AG04449 (cell line): ENCODE measurements at regions of chr6 and their contacts with region 1.

Region 1: GRCh38 chr6:35468181-35468979 is at the start of gene RPL10A:
- DNase-seq: peak; percentile 73
- H3K4me3 ChIP-seq: peak within 1 kb of the TSS; percentile 94
- CTCF ChIP-seq: peak; percentile 96

Region 2: DNA sequence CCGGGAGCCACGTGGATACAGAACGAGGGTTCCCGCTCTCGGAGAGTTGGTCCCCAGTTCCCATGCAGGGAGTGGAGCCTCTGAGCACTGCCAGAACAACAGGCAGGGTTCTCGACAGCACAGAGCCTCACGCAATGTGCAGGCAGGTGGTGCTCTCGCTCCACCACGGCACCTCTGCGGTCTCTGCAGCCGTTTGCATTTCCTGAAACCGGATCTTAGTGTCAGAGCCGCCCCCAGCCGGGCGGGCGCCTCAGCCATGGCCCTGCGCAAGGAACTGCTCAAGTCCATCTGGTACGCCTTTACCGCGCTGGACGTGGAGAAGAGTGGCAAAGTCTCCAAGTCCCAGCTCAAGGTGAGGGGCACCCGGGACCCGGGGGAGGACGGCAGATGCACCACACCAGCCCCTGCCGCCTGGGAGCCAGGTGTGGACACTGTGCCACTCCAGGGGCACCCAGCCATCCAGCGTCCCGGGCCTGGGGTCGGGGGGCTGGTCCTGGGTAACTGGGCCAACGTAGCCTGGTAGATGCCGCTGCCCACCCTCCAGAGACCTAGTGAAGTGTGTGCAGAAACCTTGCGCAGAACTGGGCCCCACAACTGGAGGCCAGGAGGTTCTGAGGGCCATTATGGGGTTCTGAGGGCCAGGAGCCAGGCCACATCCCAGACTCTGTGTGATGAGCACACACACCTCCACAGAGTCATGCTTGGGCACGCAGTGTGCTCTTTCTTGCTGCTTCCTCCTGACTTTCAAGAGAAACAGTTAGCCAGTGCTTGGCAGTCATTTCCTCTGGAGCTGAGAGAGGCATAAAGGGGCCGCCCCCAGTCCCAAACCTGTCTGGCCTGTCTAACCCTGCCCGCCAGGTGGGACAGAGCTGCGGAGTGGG is 170.5 kb before region 1 on chr6 and contains the start of gene DEF6:
- CTCF ChIA-PET with region 1: interaction called, 65 read pairs
- POLR2A ChIA-PET with region 1: no interaction called
- DNase-seq: peak; percentile 17
- H3K4me3 ChIP-seq: peak within 1 kb of the TSS; percentile 55
- CTCF ChIP-seq: peak; percentile 80

Region 3: GRCh38 chr6:35327349-35328027 is 140.9 kb before region 1 on chr6:
- CTCF ChIA-PET with region 1: interaction called, 13 read pairs
- POLR2A ChIA-PET with region 1: no interaction called
- DNase-seq: no peak
- H3K4me3 ChIP-seq: no peak overlapping the region
- CTCF ChIP-seq: peak; percentile 81

Region 4: DNA sequence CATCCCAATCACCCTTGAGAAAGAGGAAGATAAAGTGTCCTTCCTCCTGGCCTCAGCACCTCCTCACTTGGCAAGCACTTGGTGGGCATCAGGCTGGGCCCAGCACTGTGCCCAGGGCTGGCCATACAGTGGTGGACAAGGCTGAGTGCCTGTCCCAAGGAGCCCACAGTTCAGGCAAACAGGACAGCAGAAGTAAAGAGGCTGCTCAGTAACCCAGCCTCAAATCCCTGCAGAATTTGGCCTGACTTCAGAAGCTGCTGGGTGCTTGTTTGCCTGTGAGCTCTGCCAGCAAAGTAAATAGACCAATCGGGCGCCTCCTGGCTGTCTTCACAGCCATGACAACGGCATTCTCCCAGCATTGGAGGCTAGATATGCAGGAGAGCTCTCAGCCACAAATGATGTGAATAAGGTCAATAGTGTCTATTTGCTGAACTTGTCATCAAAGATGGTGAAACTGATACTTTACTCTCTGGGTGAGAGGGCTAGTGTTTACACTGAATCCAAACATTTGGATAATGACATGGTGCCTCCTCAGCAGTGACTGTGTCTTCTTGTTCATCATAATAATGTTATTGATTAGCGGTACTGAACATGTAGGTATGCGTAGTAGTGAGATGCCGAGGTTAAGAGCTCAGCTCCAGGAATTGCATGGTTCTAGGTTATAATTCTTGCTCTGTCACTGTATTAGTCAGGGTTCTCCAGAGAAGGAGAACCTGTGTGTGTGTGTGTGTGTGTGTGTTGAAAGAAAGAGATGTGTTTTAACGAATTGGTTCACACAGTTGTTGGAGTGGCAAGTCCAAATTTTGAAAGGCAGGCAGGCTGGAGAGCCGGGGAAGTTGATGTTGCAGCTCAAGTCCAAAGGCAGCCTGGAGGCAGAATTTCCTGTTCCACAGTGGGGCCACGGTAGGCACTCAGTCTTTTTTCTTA is 53.1 kb before region 1 on chr6:
- CTCF ChIA-PET with region 1: interaction called, 15 read pairs
- POLR2A ChIA-PET with region 1: interaction called, 3 read pairs
- DNase-seq: peak; percentile 69
- H3K4me3 ChIP-seq: no peak overlapping the region
- CTCF ChIP-seq: peak; percentile 68

Region 5: DNA sequence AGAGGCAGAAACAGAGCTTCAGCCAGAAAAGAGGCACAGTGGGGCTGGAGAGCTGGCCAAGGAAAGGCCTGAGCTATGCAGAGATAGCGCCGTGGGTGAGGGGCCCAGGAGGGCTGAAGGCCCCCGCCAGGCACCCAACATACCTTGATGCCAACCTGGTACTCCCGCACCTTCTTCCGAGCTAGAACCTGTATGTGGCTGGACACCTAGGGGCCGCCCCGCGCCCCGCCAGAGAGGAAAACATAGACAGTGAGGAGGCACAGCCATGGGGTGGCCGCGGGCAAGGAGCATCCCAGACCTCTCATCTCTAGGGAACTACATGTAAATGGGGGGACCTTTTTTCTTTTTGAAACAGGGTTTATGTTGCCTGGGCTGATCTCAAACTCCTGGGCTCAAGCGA is 11.8 kb after region 1 on chr6:
- CTCF ChIA-PET with region 1: interaction called, 9 read pairs
- POLR2A ChIA-PET with region 1: interaction called, 13 read pairs
- DNase-seq: no peak
- H3K4me3 ChIP-seq: no peak overlapping the region
- CTCF ChIP-seq: no peak

Region 6: GRCh38 chr6:35489995-35490733 is 21.8 kb after region 1 on chr6:
- CTCF ChIA-PET with region 1: interaction called, 6 read pairs
- POLR2A ChIA-PET with region 1: interaction called, 22 read pairs
- DNase-seq: no peak
- H3K4me3 ChIP-seq: peak overlapping the region; percentile 36
- CTCF ChIP-seq: no peak

Region 7: DNA sequence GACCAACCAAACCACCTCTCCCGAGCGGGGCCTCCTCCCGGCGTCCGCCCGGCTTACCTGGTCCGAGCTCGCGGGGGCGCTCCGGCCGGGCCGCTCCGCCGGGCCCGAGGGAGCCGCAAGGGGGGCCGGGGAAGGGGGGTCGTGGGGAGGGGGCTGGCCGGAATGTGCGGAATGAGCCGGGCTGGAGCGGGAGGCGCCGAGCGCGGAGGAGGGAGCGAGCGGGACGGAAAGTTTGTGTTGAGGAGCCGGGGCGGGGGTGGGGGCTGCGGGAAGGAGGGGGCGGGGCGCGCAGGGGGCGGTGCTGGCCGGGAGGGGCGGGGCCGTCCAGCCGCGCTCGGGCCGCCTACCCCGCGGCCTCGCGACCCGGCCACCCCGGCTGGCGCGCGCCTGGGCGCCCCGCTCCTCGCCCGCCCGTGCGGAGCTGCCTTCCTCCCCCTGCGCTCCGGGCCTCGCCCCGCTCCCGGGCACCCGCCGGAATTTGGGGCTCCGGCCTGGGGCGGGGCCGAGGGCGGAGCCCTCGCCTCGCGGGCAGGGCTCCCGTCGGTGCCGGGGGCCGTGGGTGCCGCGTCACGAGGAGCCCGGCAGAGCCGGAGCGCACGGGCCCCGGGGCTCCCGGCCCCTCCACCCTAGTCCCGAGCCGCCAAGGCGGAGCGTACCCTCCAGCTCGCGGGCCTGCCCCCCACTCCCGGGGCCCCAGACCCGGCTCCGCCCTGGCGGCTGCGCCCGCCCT is 28.6 kb after region 1 on chr6 and contains the start of gene TEAD3:
- CTCF ChIA-PET with region 1: interaction called, 4 read pairs
- POLR2A ChIA-PET with region 1: interaction called, 22 read pairs
- DNase-seq: no peak
- H3K4me3 ChIP-seq: peak within 1 kb of the TSS; percentile 77
- CTCF ChIP-seq: peak; percentile 13

Region 8: DNA sequence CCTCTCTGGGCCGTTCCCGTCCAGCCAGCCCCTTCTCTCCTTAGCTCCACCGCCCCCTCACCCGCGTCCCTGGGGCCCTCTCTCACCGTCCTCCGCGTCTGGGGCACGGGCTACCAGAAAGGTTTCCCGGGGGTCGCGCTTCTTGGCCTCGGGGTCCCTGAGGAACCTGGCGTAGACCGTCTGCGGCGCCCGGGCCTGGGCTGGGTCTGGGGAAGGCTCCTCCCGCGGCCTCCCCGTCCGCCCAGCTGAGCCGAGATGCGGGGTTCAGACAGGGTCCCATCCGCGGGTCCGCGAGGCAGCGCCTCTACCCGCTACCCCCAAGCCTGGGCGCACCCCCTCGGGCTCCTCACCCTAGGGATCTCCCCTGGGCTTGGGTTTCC is 43.2 kb after region 1 on chr6:
- CTCF ChIA-PET with region 1: no interaction called
- POLR2A ChIA-PET with region 1: no interaction called
- DNase-seq: no peak
- H3K4me3 ChIP-seq: no peak overlapping the region
- CTCF ChIP-seq: no peak